Pancreas (tissue), 10 donors: ENCODE measurements at regions of chr19 and their contacts with region 1.

Region 1: DNA sequence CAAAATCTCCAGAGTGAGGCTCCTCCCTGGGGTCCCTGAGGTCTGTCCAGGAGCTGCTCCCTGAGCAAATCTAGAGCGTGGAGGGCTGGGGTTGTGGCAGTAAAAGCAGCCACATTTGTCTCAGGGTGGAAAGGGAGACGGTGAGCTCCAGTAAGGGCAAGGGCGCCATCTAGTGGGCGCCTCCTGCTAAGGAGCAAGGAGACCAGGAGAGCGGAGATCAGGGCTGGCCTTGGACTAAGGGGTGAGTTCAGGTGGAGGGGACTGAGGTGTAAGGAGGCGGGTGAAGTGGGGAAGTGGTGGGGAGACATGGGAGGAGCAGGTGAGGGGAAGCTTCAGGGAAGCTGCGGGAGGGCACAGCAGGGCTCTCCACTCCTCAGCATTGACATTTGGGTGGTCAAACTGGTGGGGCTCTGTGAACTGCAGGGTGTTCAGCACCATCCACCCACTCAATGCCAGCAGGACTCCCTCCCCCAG is 5.3 kb upstream of the CEACAM21 start:
- DNase-seq: peak; percentile 50 to 95 (median 82)
- ATAC-seq: peak; percentile 84 to 99 (median 95)
- H3K4me3 ChIP-seq: no peak overlapping the region
- H3K27ac ChIP-seq: no peak overlapping the region
- H3K4me1 ChIP-seq: no peaks in the 10 kb centered on the region
- H3K27me3 ChIP-seq: peaks cover 0 to 36% (median 4%) of the 10 kb centered on the region in 4 donors
- CTCF ChIP-seq: peak; percentile 80 to 85 (median 83)

Region 2: DNA sequence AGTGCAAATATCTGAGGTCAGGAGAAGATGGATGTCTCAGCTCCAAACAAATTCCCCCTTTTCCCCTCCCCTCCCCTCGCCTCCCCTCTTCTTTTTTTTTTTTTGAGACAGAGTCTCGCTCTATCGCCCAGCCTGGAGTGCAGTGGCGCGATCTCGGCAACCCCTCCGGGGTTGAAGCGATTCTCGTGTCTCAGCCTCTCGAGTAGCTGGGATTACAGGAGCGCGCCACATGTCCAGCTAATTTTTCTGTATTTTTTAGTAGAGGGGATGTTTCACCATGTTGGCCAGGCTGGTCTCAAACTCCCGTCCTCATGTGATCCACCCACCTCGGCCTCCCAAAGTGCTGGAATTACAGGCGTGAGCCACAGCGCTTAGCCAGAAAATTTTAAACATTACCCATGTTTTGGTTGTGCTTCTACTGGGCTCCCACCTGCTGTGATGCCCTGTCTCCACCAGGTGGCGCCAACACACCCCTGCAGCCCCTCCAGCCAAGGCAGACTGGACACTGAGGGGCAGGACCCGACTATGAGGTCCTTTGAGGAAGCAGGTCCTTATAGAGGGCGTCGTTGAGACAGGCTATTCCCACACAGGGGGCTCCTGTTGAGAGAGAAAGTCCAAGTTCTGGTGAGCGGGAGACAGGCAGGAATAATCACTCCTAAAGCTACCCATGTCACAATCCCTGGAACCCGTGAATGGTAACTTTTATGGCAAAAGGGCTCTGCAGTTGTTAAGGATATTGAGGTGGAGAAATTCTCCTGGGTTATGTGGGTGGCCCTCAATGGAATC is 121.4 kb before region 1 on chr19:
- intact Hi-C with region 1: loop called in 2 of 3 experiments (anchors 5 to 10 kb)
- DNase-seq: peak; percentile 51 to 87 (median 73)
- ATAC-seq: peak; percentile 90 to 99 (median 96)
- H3K4me3 ChIP-seq: peak overlapping the region in 1 of 4 donors; percentile 2
- H3K27ac ChIP-seq: no peak overlapping the region
- H3K4me1 ChIP-seq: no peaks in the 10 kb centered on the region
- H3K27me3 ChIP-seq: no peaks in the 10 kb centered on the region
- CTCF ChIP-seq: peak; percentile 92 to 99 (median 95)

Region 3: GRCh38 chr19:41671491-41671890 is 100.8 kb after region 1 on chr19:
- intact Hi-C with region 1: no loop called
- DNase-seq: no peak
- ATAC-seq: no peak
- H3K4me3 ChIP-seq: no peak overlapping the region
- H3K27ac ChIP-seq: no peak overlapping the region
- H3K4me1 ChIP-seq: no peaks in the 10 kb centered on the region
- H3K27me3 ChIP-seq: peaks cover 0 to 7% (median 0%) of the 10 kb centered on the region in 4 donors
- CTCF ChIP-seq: no peak

Region 4: DNA sequence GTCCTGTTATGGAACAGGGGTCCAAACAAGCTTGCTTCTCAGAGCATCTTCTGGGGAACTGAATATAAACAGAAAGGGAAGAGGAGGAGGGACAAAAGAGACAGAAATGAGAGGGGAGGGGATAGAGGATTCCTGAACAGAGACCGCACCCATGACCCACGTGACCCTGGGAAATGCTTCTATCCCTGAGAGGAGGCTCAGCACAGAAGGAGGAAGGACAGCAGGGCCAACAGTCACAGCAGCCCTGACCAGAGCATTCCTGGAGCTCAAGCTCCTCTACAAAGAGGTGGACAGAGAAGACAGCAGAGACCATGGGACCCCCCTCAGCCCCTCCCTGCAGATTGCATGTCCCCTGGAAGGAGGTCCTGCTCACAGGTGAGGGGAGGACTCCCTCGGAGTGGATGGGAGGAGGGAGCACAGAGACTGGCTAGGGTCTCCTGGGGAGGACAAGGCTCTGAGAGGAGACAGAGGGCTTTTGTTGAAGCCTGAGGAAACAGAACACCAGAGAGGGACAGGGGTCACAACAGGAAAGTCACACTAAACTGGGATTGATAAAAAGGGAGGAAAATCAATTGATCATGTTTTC is 184.7 kb after region 1 on chr19 and contains the start of gene CEACAM6:
- intact Hi-C with region 1: no loop called
- DNase-seq: no peak
- ATAC-seq: no peak
- H3K4me3 ChIP-seq: no peak within 1 kb of the TSS
- H3K27ac ChIP-seq: no peak within 1 kb of the TSS
- H3K4me1 ChIP-seq: peaks cover 0 to 9% (median 6%) of the 10 kb centered on the region in 3 donors
- H3K27me3 ChIP-seq: no peaks in the 10 kb centered on the region
- CTCF ChIP-seq: no peak
- total RNA-seq, gene CEACAM6: 3.6 to 9.0 (median 8.0) TPM